ENCODE measurements at regions of chr1 and their contacts with region 1.

Region 1: GRCh38 chr1:150168960-150169601 is 19.4 kb downstream of the PLEKHO1 start:
- DNase-seq: peak; percentile 59
- ATAC-seq: peak; percentile 87
- H3K4me3 ChIP-seq: no peak overlapping the region
- H3K27ac ChIP-seq: no peak overlapping the region
- H3K4me1 ChIP-seq: no peaks in the 10 kb centered on the region
- H3K27me3 ChIP-seq: no peaks in the 10 kb centered on the region
- CTCF ChIP-seq: peak; percentile 85 to 92 (median 86)
- POLR2A ChIP-seq: no peak
- RAD21 ChIP-seq: peak; percentile 96

Region 2: DNA sequence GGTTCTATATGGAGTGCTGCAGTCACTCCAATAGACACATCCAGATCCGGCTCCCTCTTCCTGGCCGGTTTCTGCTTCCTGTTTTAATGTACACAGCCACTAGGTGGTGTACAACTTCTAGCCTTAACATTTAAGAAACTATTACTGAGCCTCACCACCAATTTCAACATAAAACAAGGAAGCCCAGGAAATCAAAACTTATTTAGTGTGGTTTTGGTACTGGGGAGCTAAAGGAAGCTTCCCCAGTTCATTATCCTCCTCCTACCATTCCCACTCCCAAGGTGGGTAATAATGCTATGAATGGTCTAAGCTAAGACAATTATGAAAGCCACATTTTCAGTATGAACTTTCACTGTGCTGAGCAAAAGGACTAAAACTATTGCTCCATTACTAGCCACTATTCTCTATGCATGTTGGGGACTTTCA is 206.9 kb before region 1 on chr1:
- CTCF ChIA-PET with region 1: interaction called, 10 read pairs
- POLR2A ChIA-PET with region 1: no interaction called
- RAD21 ChIA-PET with region 1: no interaction called
- intact Hi-C with region 1: loop called (anchors 1 kb)
- DNase-seq: peak; percentile 58
- ATAC-seq: peak; percentile 92
- H3K4me3 ChIP-seq: no peak overlapping the region
- H3K27ac ChIP-seq: peak overlapping the region; percentile 33; the same call in 1 of the 2 replicates
- H3K4me1 ChIP-seq: no peaks in the 10 kb centered on the region
- H3K27me3 ChIP-seq: no peaks in the 10 kb centered on the region
- CTCF ChIP-seq: peak; percentile 50 to 83 (median 71); a peak in 5 of 6 replicates
- POLR2A ChIP-seq: no peak
- RAD21 ChIP-seq: peak; percentile 90

Region 3: DNA sequence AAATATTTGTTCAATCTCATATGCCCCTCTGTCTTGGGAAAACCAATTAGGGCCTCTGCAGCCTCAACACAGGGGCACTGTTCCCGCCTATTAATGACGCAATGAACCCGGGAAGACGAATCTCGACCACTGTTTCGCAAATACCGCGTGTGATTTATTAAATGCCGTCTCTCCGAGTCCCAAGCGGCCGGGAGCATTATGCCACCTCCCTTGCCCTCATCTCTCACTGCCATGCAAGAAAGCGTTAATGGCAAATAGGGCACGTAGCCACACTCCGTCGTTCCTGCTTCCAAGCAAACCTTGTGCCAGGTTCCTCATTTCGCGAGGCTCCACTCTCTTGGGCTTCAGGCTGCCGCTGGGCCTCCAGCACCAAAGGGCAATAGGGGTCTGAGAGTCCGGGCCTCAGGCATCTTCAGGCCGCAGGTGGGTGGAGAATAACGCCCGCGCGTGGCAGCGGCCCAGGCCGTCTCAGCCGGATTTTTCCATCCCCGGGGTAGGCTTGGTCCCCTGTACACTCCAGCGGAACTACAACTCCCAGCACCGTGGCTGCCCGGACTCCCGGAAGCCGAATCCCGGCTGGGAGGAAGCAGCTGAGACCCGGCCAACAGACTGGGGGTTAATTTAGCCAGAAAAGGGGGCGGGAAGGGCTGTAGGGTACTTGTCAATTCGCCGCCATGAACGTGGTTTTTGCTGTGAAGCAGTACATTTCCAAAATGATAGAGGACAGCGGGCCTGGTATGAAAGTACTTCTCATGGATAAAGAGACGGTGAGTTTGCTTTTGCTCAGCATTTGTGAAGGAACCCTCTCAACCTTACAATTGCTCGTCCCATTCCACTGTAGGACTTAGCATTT is 101.7 kb before region 1 on chr1 and contains the start of gene VPS45:
- CTCF ChIA-PET with region 1: interaction called, 21 read pairs
- POLR2A ChIA-PET with region 1: no interaction called
- RAD21 ChIA-PET with region 1: no interaction called
- intact Hi-C with region 1: no loop called
- DNase-seq: peak; percentile 89
- ATAC-seq: peak; percentile 93
- H3K4me3 ChIP-seq: peak within 1 kb of the TSS; percentile 78 to 83
- H3K27ac ChIP-seq: peak within 1 kb of the TSS; percentile 94
- H3K4me1 ChIP-seq: peaks cover 15 to 32% of the 10 kb centered on the region in 2 experiments
- H3K27me3 ChIP-seq: no peaks in the 10 kb centered on the region
- CTCF ChIP-seq: no peak
- POLR2A ChIP-seq: no peak
- RAD21 ChIP-seq: no peak
- total RNA-seq, gene VPS45: 28.1 TPM

Region 4: DNA sequence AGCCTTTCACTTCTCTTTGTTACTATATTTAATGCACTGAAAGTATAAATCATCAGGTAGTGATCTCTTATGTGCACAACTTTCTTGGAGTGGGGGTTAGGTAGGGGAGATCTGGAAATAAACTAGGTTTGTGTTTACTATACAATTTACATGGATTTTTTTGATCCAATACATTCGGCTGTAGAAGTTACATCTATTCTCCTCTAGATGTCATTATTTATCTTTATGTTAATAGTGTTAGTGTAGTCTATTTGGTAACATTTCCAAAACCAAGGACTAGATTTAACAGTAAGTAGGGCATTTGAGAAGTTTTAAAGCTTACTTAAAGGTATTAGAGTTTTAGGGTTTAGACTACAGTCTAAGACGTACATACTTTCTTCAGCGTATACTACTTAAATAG is 96.1 kb before region 1 on chr1:
- CTCF ChIA-PET with region 1: interaction called, 21 read pairs
- POLR2A ChIA-PET with region 1: interaction called, 3 read pairs
- RAD21 ChIA-PET with region 1: interaction called, 3 to 6 read pairs
- intact Hi-C with region 1: loop called (anchors 1 kb)
- DNase-seq: peak; percentile 12
- ATAC-seq: peak; percentile 53; the same call in 1 of the 2 replicates
- H3K4me3 ChIP-seq: no peak overlapping the region
- H3K27ac ChIP-seq: no peak overlapping the region
- H3K4me1 ChIP-seq: peaks cover 0 to 8% of the 10 kb centered on the region in 2 experiments; a peak in 2 of 4 replicates
- H3K27me3 ChIP-seq: no peaks in the 10 kb centered on the region
- CTCF ChIP-seq: peak; percentile 10 to 64 (median 57); a peak in 4 of 6 replicates
- POLR2A ChIP-seq: no peak
- RAD21 ChIP-seq: peak; percentile 66

Region 5: GRCh38 chr1:150186789-150187559 is 17.9 kb after region 1 on chr1:
- CTCF ChIA-PET with region 1: interaction called, 12 read pairs
- POLR2A ChIA-PET with region 1: interaction called, 5 read pairs
- RAD21 ChIA-PET with region 1: no interaction called
- intact Hi-C with region 1: no loop called
- DNase-seq: peak; percentile 38
- ATAC-seq: peak; percentile 74
- H3K4me3 ChIP-seq: peak overlapping the region; percentile 22 to 44
- H3K27ac ChIP-seq: peak overlapping the region; percentile 61
- H3K4me1 ChIP-seq: peaks cover 14 to 25% of the 10 kb centered on the region in 2 experiments
- H3K27me3 ChIP-seq: no peaks in the 10 kb centered on the region
- CTCF ChIP-seq: peak; percentile 39 to 63 (median 56); a peak in 4 of 6 replicates
- POLR2A ChIP-seq: no peak
- RAD21 ChIP-seq: peak; percentile 83

Region 6: GRCh38 chr1:150609732-150610131 is 440.7 kb after region 1 on chr1:
- CTCF ChIA-PET with region 1: no interaction called
- POLR2A ChIA-PET with region 1: no interaction called
- RAD21 ChIA-PET with region 1: no interaction called
- intact Hi-C with region 1: no loop called
- DNase-seq: no peak
- ATAC-seq: no peak
- H3K4me3 ChIP-seq: no peak overlapping the region
- H3K27ac ChIP-seq: no peak overlapping the region
- H3K4me1 ChIP-seq: peaks cover 25 to 48% of the 10 kb centered on the region in 2 experiments
- H3K27me3 ChIP-seq: no peaks in the 10 kb centered on the region
- CTCF ChIP-seq: no peak
- POLR2A ChIP-seq: no peak
- RAD21 ChIP-seq: no peak

Measured in HCT116 (cell line).